Left ventricle myocardium superior (tissue), 1 donor: ENCODE measurements at regions of chr6 and their contacts with region 1.

Region 1: GRCh38 chr6:159134701-159135364 is 34.4 kb upstream of the FNDC1 start:
- DNase-seq: no peak
- ATAC-seq: peak; percentile 80

Region 2: GRCh38 chr6:159008656-159009288 is 126.1 kb before region 1 on chr6:
- intact Hi-C with region 1: loop called (anchors 2 kb)
- DNase-seq: no peak
- ATAC-seq: peak; percentile 45

Region 3: GRCh38 chr6:159042003-159042825 is 92.6 kb before region 1 on chr6:
- intact Hi-C with region 1: loop called (anchors 5 kb)
- DNase-seq: peak; percentile 43
- ATAC-seq: peak; percentile 82

Region 4: DNA sequence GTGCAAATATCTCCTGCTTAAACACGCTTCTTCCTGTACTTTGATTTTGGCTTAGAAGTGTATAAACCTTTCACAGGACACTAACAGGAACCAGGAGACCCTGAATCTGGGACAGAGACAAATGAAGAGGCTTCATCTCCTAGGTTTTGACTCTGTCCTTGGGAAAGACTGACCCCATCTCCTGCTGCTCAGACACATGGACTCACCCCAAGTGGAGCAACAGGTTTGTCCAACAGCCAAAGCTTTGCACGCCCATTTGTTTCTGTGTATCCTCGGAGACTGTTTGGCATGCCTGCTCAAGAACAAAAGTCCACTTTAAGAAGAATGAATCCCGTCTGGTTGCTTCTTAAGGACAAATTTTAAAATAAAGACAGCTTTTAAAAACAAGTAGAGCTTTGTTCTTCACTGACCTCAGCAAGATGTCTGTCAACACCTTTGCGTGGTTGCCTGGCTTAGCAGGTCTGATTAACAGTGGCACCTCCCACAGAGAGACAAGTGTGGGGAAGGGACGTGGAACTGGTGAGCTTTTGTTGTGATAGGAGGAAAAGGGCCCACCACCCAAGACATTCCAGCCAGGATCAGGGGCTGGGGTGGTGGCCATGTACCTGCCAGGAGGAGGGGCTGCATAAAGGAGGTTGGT is 355.6 kb after region 1 on chr6:
- intact Hi-C with region 1: no loop called
- DNase-seq: peak; percentile 54
- ATAC-seq: peak; percentile 82